Aorta (tissue), 5 donors: ENCODE measurements at regions of chr10 and their contacts with region 1.

Region 1: GRCh38 chr10:17394854-17395253 is 59.5 kb downstream of the ST8SIA6 start:
- DNase-seq: no peak
- ATAC-seq: no peak
- H3K4me3 ChIP-seq: no peak overlapping the region
- H3K27ac ChIP-seq: no peak overlapping the region
- H3K4me1 ChIP-seq: no peaks in the 10 kb centered on the region
- H3K27me3 ChIP-seq: no peaks in the 10 kb centered on the region

Region 2: GRCh38 chr10:17216217-17216900 is 178.5 kb before region 1 on chr10:
- intact Hi-C with region 1: no loop called
- DNase-seq: no peak
- ATAC-seq: peak; percentile 92
- H3K4me3 ChIP-seq: no peak overlapping the region
- H3K27ac ChIP-seq: peak overlapping the region; percentile 80 to 100
- H3K4me1 ChIP-seq: peaks cover 0 to 4% of the 10 kb centered on the region in 2 donors
- H3K27me3 ChIP-seq: no peaks in the 10 kb centered on the region

Region 3: DNA sequence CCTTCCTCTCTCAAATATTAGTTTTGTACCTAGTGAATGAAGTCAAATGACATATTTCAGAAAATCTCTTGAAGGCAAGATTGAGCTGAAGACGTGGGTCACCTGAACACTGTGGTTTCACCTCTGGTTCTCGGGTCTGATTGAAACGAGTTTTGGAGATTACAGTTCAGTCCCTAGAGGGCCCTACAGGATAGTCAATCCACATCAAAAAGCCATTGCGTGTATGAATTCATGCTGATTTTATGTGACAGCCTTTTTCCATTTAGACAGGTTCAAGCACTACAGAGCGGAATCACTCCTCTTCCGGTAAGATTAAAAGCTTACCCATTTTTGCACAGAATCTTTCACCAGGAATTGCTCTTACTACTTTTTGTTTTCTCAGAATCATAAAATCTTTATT is 104.6 kb before region 1 on chr10:
- intact Hi-C with region 1: loop called in 1 of 2 experiments (anchors 10 kb)
- DNase-seq: no peak
- ATAC-seq: no peak
- H3K4me3 ChIP-seq: no peak overlapping the region
- H3K27ac ChIP-seq: no peak overlapping the region
- H3K4me1 ChIP-seq: no peaks in the 10 kb centered on the region
- H3K27me3 ChIP-seq: peaks cover 0 to 1% of the 10 kb centered on the region in 2 donors

Region 4: DNA sequence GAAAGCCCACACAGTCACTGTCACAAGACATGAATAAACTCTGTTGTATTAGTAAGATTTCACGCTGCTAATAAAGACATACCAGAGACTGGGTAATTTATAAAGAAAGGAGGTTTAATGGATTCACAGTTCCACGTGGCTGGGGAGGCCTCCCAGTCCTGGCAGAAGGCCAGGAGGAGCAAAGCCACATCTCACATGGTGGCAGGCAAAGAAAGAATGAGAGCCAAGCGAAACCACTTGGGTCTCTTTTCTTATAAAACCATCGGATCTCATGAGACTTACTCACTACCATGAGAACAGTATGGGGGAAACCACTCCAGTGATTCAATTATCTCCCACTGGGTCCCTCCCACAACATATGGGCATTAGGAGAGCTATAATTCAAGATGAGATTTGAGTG is 50.6 kb before region 1 on chr10:
- intact Hi-C with region 1: no loop called
- DNase-seq: no peak
- ATAC-seq: no peak
- H3K4me3 ChIP-seq: no peak overlapping the region
- H3K27ac ChIP-seq: no peak overlapping the region
- H3K4me1 ChIP-seq: peaks cover 0 to 3% of the 10 kb centered on the region in 2 donors
- H3K27me3 ChIP-seq: no peaks in the 10 kb centered on the region

Region 5: DNA sequence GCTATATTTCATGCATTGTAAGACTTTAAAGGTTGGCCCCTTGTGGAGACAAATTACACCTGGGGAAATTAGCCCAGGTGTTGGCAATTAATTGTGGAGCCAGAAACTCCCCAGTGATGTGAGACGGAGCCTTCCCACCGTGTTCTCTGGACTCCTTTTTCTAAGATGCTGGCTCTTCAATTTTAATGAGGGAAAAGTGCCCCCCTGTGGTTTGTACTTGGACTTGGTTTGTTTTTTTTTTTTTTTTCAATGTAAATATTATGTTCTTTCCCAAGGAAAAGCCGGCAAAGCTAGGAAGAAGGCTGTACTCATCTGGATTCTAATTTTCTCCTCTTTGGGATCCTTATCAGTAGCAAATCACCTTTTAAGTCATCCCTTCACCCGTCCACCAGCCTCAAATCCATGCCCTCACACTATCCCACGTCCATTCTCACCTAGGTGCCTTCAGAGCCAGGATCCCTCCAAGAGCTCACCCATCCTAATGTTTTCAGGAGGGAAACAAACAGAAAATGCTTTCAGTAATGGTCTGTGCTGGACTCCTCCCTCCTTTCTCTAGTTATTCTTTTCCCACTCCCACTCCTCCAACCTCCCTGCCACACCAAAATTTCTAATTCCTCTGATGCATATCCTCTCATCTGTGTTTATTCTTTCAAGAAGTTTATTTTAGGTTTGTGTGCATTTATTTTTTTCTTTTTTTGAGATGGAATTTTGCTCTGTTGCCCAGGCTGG is 79.9 kb after region 1 on chr10:
- intact Hi-C with region 1: no loop called
- DNase-seq: no peak
- ATAC-seq: no peak
- H3K4me3 ChIP-seq: no peak overlapping the region
- H3K27ac ChIP-seq: no peak overlapping the region
- H3K4me1 ChIP-seq: no peaks in the 10 kb centered on the region
- H3K27me3 ChIP-seq: peaks cover 0 to 1% of the 10 kb centered on the region in 2 donors